ENCODE measurements at regions of chr9 and their contacts with region 1.

Region 1: DNA sequence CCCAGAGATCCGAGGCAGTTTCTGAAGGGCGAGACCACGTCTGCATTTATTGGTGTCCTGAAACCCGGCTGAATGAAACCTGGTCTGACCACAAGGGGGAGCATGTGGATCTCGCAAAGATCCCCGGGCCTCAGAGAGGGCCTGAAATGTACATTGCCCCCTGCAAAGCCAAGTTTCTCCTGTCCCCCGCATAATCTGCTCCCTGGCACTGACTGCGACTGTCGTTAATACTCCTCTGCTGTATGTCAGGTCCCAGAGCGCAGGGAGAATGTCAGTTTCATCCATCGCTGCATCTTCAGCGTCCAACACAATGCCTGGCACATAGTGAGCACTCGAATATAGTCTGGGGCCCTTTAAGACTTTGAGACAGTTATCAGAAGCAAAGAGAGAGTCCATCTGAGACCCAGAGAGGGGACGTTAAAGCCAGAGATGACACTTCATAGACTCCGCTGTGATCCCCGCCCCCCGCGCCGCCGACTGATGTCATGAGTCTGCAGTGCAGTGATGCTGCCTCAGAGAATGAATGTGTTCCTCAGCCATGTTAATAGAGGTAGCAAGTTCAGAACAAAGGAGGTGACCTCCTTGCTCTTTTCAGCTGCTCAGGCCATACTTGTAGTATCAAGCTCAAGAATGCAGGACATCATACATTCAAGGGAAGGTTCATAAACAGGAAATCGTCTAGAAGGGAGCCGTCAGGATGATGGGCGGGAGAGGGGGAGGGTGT is 74.5 kb upstream of the BARHL1 start:
- DNase-seq: peak; percentile 79 to 87 (median 82)
- ATAC-seq: peak; percentile 93
- H3K4me3 ChIP-seq: no peak overlapping the region
- H3K27ac ChIP-seq: no peak overlapping the region
- H3K4me1 ChIP-seq: peaks cover 0 to 6% of the 10 kb centered on the region in 2 experiments; a peak in 1 of 5 replicates
- H3K27me3 ChIP-seq: peaks cover 60 to 89% of the 10 kb centered on the region in 2 experiments
- CTCF ChIP-seq: peak; percentile 81 to 88 (median 88)
- EP300 ChIP-seq: no peak
- POLR2A ChIP-seq: no peak
- RAD21 ChIP-seq: peak; percentile 71 to 84

Region 2: DNA sequence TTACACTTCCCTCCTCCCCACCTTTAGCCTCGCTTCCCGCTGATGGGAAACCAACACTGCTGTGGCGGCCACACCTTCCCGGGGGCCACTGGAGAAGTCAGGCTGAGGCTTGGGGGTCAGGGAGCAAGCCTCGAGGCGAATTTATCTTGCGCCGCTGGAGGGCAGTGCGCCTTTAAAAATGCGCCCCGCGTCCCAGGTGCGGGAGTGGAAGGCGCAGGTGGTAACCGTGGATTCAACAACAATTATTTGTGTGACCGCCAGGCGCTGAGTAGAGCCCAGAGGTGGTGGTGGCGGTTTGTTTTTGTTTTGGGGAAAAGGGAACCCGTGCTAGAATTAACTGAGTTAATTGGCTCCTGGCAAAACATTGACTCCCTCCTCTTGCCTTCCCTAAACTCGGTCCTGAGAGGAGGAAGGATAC is 96.8 kb before region 1 on chr9:
- CTCF ChIA-PET with region 1: interaction called, 3 read pairs
- POLR2A ChIA-PET with region 1: no interaction called
- in situ Hi-C with region 1: no loop called
- intact Hi-C with region 1: loop called (anchors 1 kb)
- DNase-seq: peak; percentile 71 to 77 (median 76)
- ATAC-seq: peak; percentile 87
- H3K4me3 ChIP-seq: no peak overlapping the region
- H3K27ac ChIP-seq: no peak overlapping the region
- H3K4me1 ChIP-seq: peaks cover 13 to 17% of the 10 kb centered on the region in 2 experiments; a peak in 4 of 5 replicates
- H3K27me3 ChIP-seq: peaks cover 23 to 31% of the 10 kb centered on the region in 2 experiments
- CTCF ChIP-seq: peak; percentile 85 to 93 (median 86)
- EP300 ChIP-seq: no peak
- POLR2A ChIP-seq: no peak
- RAD21 ChIP-seq: peak; percentile 75 to 86

Region 3: DNA sequence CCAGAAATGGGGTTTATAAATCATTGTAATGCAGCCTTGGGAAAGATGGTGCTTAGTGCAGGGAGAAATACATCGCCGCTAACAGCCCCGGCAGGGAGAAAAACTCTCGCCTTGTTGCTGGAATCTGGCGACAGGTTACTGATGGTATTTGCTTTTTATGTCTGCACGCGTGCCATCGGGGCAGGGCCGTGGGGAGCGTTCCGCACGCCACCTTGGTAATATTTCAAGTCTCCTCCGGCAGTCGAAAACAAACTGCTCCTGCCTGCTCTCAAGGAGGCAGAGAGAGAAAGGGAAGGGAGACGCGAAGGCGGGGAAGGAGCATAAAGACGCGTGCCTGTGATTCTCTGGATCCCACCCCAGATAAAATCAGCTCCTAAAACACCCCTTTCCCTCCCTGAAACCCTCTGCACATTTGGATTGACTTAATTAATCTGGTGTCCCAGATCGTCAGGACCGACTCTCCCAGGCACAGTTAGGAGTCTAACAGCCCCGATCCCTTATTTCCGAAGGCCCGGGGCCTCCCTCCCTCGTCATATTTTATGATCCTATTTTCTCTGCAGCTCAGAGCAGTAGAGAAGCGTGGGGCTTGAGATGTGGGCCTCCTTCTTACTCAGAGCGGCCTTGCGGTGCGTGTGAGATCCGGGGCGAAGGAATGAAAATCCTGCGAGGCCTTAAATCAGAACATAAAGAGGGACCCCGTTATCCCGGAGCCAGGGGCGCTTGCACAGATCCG is 50.2 kb before region 1 on chr9:
- CTCF ChIA-PET with region 1: no interaction called
- POLR2A ChIA-PET with region 1: no interaction called
- in situ Hi-C with region 1: no loop called
- intact Hi-C with region 1: no loop called
- DNase-seq: no peak
- ATAC-seq: no peak
- H3K4me3 ChIP-seq: no peak overlapping the region
- H3K27ac ChIP-seq: no peak overlapping the region
- H3K4me1 ChIP-seq: no peaks in the 10 kb centered on the region
- H3K27me3 ChIP-seq: peaks cover 59 to 74% of the 10 kb centered on the region in 2 experiments
- CTCF ChIP-seq: no peak
- EP300 ChIP-seq: no peak
- POLR2A ChIP-seq: no peak
- RAD21 ChIP-seq: no peak

Region 4: GRCh38 chr9:132575005-132575609 is 67.2 kb after region 1 on chr9:
- CTCF ChIA-PET with region 1: interaction called, 6 read pairs
- POLR2A ChIA-PET with region 1: interaction called, 3 read pairs
- in situ Hi-C with region 1: no loop called
- intact Hi-C with region 1: loop called (anchors 1 kb)
- DNase-seq: peak; percentile 74 to 85 (median 81)
- ATAC-seq: peak; percentile 97
- H3K4me3 ChIP-seq: no peak overlapping the region
- H3K27ac ChIP-seq: no peak overlapping the region
- H3K4me1 ChIP-seq: no peaks in the 10 kb centered on the region; a peak in 1 of 5 replicates
- H3K27me3 ChIP-seq: peaks cover 4 to 62% of the 10 kb centered on the region in 2 experiments; a peak in 3 of 5 replicates
- CTCF ChIP-seq: peak; percentile 85 to 86 (median 86)
- EP300 ChIP-seq: no peak
- POLR2A ChIP-seq: no peak
- RAD21 ChIP-seq: peak; percentile 75 to 90

Region 5: GRCh38 chr9:132809677-132810271 is 301.9 kb after region 1 on chr9:
- CTCF ChIA-PET with region 1: no interaction called
- POLR2A ChIA-PET with region 1: no interaction called
- in situ Hi-C with region 1: loop called (anchors 5 kb)
- intact Hi-C with region 1: no loop called
- DNase-seq: no peak
- ATAC-seq: no peak
- H3K4me3 ChIP-seq: no peak overlapping the region
- H3K27ac ChIP-seq: no peak overlapping the region
- H3K4me1 ChIP-seq: peaks cover 0 to 5% of the 10 kb centered on the region in 2 experiments; a peak in 1 of 5 replicates
- H3K27me3 ChIP-seq: peaks cover 58 to 83% of the 10 kb centered on the region in 2 experiments
- CTCF ChIP-seq: no peak
- EP300 ChIP-seq: no peak
- POLR2A ChIP-seq: no peak
- RAD21 ChIP-seq: no peak

Measured in K562 (cell line).